ENCODE measurements at regions of chr1 and their contacts with region 1.

Region 1: DNA sequence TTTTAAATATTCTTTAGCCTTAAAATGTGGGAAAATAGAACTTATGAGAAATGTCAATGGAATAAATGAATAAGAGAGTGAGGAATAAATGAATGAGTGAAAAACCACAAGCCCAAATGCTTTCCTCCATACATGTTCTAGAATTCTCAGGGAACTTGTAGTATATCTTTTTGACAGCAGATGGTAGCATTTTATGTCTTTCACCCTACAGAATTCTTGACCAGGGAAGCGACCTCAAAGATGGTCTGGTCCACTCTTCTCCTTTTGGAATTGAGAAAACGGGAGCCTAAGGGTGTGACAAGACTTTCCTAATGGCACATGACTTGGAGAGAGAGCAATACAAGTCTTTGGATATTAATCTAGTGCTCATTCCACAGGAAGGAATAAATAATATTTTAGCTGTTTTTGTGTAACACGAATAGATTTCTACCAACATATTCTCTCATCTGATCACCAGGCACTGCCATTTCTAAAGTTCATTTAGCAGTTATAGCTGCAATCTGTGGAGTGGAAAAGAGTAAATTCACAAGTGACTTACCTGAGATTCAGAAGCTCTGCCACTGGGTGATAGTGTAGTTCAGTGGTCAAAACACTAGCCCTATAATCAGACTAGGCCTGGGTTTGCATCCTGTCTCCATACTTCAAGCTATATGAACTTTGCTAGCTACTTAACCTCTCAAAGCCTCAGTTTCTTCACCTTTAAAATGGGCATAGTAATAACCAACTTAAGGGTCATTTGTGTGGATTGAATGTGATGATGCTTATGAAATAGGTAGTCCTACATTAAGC is 15.0 kb upstream of the F5 start:
- DNase-seq: peak; percentile 19
- H3K4me3 ChIP-seq: no peak overlapping the region
- H3K27ac ChIP-seq: no peak overlapping the region
- H3K4me1 ChIP-seq: no peaks in the 10 kb centered on the region
- H3K27me3 ChIP-seq: peaks cover 22% of the 10 kb centered on the region
- CTCF ChIP-seq: peak; percentile 55

Region 2: GRCh38 chr1:169565335-169566271 is 35.7 kb before region 1 on chr1:
- CTCF ChIA-PET with region 1: no interaction called
- POLR2A ChIA-PET with region 1: no interaction called
- intact Hi-C with region 1: no loop called
- DNase-seq: peak; percentile 58
- H3K4me3 ChIP-seq: no peak overlapping the region
- H3K27ac ChIP-seq: no peak overlapping the region
- H3K4me1 ChIP-seq: peaks cover 11% of the 10 kb centered on the region
- H3K27me3 ChIP-seq: no peaks in the 10 kb centered on the region
- CTCF ChIP-seq: no peak

Region 3: DNA sequence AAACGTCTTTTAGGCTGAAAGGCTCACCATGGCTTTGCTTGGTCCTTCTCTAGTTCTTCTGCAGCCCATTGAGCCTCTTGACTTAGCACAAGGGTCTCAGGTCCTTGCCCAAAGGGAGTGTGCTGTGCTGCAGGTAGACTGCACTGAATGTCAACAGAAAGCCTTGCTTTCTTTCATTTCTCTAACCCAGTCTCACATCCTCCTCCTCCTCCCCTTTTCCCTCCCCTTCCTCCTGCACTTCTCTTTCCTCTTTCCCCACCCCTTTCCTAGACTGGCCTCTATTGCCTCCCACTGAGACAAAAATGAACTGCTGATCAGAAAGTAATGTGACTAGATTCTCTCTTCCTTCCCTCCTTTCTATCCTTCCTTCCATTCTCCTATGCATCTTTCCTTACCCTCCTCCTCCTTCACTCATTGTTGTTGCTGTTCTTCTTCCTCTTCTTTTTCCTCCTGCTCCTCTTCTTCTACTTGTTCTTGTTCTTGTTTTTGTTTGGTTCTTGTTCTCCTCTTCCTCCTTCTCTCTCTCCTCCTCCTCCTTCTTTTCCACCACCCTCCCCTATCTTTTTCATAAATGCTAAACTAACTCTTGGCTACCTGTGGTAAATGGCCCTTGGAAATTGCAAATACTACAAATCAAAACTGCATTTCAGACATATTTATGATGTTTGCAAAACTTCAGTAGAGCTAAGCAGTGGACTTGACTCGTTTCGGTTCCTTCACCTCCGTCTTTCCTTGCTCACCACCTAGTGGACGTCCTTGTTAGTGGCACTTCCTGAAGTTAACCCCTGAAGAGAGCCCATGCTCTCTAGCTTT is 110.4 kb after region 1 on chr1 and contains the start of gene SELL:
- CTCF ChIA-PET with region 1: interaction called, 9 read pairs
- POLR2A ChIA-PET with region 1: no interaction called
- intact Hi-C with region 1: loop called (anchors 2 kb)
- DNase-seq: peak; percentile 79
- H3K4me3 ChIP-seq: peak within 1 kb of the TSS; percentile 24
- H3K27ac ChIP-seq: no peak within 1 kb of the TSS
- H3K4me1 ChIP-seq: no peaks in the 10 kb centered on the region
- H3K27me3 ChIP-seq: peaks cover 23% of the 10 kb centered on the region
- CTCF ChIP-seq: peak; percentile 83
- total RNA-seq, gene SELL: not detected in 2 replicates

Region 4: DNA sequence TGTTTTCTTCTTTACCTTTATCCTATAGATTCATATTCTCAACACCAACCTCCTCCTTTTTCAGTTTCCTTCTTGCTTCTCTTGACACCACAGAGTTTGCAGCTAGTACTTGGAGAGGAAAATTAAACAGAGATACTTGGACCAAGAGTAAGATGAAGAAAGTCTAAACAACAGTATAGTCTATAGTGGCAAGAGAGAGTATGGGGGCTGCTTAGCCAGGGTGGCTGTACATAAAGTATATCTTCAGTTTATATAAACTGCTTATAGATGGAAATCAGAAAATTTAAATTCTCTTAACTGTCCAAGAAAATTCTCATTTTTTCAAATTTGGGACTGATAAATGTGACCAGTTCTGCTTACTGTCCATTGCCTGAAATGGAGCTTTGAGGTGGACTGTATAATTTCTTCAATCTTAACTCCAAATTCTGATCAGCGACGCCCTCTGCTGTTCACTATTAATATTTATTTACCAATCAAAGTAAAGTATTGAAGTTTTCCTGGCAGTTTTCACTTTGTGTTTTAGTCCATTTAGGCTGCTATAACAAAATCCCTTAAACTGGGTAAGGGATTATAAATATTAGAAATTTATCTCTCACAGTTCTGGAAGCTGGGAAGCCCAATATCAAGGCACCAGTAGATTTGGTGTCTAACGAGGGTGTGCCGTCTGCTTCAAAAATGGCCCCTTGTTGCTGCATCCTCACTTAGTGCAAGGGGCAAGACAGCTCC is 208.2 kb after region 1 on chr1:
- CTCF ChIA-PET with region 1: no interaction called
- POLR2A ChIA-PET with region 1: no interaction called
- intact Hi-C with region 1: loop called (anchors 2 kb)
- DNase-seq: peak; percentile 44
- H3K4me3 ChIP-seq: no peak overlapping the region
- H3K27ac ChIP-seq: no peak overlapping the region
- H3K4me1 ChIP-seq: no peaks in the 10 kb centered on the region
- H3K27me3 ChIP-seq: no peaks in the 10 kb centered on the region
- CTCF ChIP-seq: peak; percentile 68

Measured in A673 (cell line).